ENCODE measurements at regions of chr5 and their contacts with region 1.

Region 1: DNA sequence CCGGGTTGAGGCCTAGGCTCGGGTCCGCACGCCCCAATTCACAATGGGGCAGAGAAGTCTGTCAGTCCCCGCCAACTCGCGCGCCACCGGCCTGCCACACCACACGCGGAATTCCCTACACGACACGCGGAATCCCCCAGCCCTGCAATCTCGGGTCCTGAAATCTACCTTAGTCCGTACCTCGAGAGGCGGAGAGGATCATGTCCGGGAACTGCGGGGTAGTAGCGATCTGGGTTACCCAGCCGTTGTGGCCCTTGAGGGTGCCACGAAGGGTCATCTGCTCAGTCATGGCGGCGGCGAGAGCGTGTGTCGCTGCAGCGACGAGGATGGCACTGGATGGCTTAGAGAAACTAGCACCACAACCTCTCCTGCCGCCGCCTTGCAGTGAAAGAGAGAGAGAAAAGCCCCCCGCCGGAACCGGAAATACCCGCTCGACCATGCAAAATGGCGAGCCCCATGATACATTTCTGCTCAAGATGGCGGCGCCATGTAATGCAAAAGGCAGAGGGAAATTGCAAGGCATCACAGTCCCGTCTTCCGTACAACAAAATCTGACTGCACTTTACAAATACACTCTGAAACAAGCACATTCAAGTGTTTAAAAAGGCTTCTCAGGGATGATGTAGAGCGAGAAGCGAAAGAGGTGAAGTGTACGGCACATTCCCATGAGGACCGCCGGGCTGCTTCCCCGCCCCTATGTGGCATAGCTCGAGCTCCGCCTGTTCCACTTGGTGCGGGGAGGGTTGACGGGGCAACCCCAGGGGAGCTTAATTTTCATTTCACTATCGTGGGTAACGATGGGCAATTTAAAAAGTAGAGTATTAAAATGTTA is at the start of gene RACK1:
- DNase-seq: peak; percentile 94
- ATAC-seq: peak; percentile 72
- H3K4me3 Mint-ChIP-seq: peak within 1 kb of the TSS; percentile 98
- H3K27ac Mint-ChIP-seq: peak within 1 kb of the TSS; percentile 99
- H3K4me1 Mint-ChIP-seq: peaks cover 63% of the 10 kb centered on the region
- H3K27me3 Mint-ChIP-seq: no peaks in the 10 kb centered on the region
- total RNA-seq, gene RACK1: 1,796 to 1,942 TPM

Region 2: DNA sequence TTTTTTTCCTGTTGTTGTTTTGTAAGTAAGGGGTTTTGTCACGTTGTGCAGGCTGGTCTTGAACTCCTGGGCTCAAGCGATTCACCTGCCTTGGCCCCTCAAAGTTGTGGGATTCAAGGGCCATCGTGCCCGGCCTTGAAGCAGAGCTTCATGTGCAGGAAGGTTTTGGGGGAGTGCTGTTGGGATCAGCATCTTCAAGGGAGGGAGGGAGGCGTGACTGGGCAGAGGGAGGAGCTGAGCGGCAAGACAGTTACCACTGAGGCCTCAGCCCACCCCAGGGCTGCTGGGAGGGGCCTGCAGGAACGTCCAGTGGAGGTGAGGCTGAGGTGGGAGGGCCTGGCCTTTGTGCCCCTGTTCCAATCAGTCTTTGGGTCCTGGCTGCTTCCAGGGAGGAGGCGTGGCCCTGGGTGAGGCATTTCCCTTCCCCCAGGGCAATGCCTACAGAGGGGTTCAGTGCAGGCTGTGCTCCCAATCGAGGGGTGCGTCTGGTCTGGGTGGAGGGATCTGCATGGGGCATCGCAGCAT is 134.2 kb before region 1 on chr5:
- CTCF ChIA-PET with region 1: no interaction called
- POLR2A ChIA-PET with region 1: no interaction called
- DNase-seq: no peak
- ATAC-seq: no peak
- H3K4me3 Mint-ChIP-seq: no peak overlapping the region
- H3K27ac Mint-ChIP-seq: no peak overlapping the region
- H3K4me1 Mint-ChIP-seq: peaks cover under 1% of the 10 kb centered on the region
- H3K27me3 Mint-ChIP-seq: peaks cover 30% of the 10 kb centered on the region

Region 3: GRCh38 chr5:181260387-181261319 is 16.9 kb after region 1 on chr5 and contains the start of gene TRIM52:
- CTCF ChIA-PET with region 1: interaction called, 9 read pairs
- POLR2A ChIA-PET with region 1: interaction called, 86 read pairs
- DNase-seq: peak; percentile 94
- ATAC-seq: peak; percentile 87
- H3K4me3 Mint-ChIP-seq: peak within 1 kb of the TSS; percentile 93
- H3K27ac Mint-ChIP-seq: peak within 1 kb of the TSS; percentile 96
- H3K4me1 Mint-ChIP-seq: peaks cover 35% of the 10 kb centered on the region
- H3K27me3 Mint-ChIP-seq: no peaks in the 10 kb centered on the region
- total RNA-seq, gene TRIM52: 22.4 to 23.2 TPM